ENCODE measurements at regions of chr17 and their contacts with region 1.

Region 1: GRCh38 chr17:44115585-44116415 is 7.6 kb downstream of the HDAC5 start:
- DNase-seq: peak; percentile 42
- H3K4me3 Mint-ChIP-seq: no peak overlapping the region
- H3K27ac Mint-ChIP-seq: no peak overlapping the region
- H3K4me1 Mint-ChIP-seq: peaks cover 33% of the 10 kb centered on the region
- H3K27me3 Mint-ChIP-seq: no peaks in the 10 kb centered on the region

Region 2: GRCh38 chr17:44084131-44084544 is 31.7 kb before region 1 on chr17:
- CTCF ChIA-PET with region 1: interaction called, 16 read pairs
- DNase-seq: peak; percentile 46
- H3K4me3 Mint-ChIP-seq: no peak overlapping the region
- H3K27ac Mint-ChIP-seq: no peak overlapping the region
- H3K4me1 Mint-ChIP-seq: peaks cover 11% of the 10 kb centered on the region
- H3K27me3 Mint-ChIP-seq: no peaks in the 10 kb centered on the region

Region 3: DNA sequence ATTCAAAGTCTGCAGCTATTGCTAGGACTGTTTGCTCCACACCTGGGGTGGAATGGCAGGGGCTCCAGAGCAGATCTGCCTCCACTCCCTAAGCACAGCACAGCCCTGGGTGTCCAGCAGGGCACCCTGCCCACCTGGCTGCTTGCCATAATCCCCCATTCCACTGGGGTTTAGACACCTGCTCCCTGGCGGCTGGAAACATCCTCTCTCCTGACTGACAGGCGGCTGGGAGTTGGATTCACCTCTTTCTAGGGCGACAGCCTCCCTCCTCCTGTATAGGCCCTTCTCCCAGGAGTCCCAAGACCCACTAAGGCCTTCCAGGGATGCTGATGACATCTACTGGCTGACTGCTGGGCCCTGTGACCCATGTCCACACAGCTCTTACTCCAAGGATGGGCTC is 10.3 kb before region 1 on chr17:
- CTCF ChIA-PET with region 1: interaction called, 10 read pairs
- DNase-seq: no peak
- H3K4me3 Mint-ChIP-seq: no peak overlapping the region
- H3K27ac Mint-ChIP-seq: no peak overlapping the region
- H3K4me1 Mint-ChIP-seq: peaks cover 3% of the 10 kb centered on the region
- H3K27me3 Mint-ChIP-seq: no peaks in the 10 kb centered on the region

Region 4: DNA sequence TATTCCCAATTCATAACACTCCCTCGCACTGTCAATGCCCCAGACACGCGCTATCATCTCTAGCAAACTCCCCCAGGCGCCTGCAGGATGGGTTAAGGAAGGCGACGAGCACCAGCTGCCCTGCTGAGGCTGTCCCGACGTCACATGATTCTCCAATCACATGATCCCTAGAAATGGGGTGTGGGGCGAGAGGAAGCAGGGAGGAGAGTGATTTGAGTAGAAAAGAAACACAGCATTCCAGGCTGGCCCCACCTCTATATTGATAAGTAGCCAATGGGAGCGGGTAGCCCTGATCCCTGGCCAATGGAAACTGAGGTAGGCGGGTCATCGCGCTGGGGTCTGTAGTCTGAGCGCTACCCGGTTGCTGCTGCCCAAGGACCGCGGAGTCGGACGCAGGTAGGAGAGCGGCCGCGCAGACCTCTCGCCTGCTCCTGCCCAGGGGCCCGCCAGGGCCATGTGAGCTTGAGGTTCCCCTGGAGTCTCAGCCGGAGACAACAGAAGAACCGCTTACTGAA is 229.2 kb after region 1 on chr17 and contains the start of gene GRN:
- CTCF ChIA-PET with region 1: no interaction called
- DNase-seq: peak; percentile 93
- H3K4me3 Mint-ChIP-seq: peak within 1 kb of the TSS; percentile 87
- H3K27ac Mint-ChIP-seq: peak within 1 kb of the TSS; percentile 51
- H3K4me1 Mint-ChIP-seq: peaks cover 28% of the 10 kb centered on the region
- H3K27me3 Mint-ChIP-seq: peaks cover 31% of the 10 kb centered on the region